Activated B cell treated with CpG ODN at 0.5 μM for 24 hours (primary cell): ENCODE measurements at regions of chr11 and their contacts with region 1.

Region 1: DNA sequence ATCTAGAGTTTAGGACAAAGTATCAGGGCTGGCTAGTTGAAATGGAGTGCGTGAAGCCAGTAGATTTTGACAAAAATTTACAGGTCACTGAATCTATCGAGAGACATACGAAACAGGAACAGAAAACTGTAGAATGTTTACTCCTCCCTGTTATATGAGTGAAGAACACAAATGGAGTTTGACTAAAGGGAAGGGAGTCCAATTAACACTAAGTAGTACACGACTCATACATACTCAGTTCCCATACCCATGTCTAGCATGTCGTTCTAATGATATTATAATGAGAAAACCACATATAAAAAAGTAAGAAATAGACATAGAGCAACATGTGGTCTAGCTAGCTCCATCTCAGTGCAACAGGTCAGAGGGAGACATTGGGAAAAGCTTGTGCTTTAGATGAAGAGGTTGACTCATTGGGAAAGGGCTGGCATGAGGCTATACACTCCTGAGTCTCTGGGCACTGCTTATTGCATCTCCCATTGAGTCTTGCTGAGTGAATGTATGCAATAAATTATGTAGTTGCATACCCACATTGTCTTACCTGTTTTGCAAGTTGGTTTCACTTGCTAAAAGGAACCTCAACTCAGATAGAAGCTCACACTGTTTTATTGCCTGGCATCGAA is 43.5 kb downstream of the CD44 start:
- DNase-seq: no peak
- ATAC-seq: peak; percentile 68
- H3K4me3 Mint-ChIP-seq: peak overlapping the region; percentile 68
- H3K27ac Mint-ChIP-seq: peak overlapping the region; percentile 80
- H3K4me1 Mint-ChIP-seq: peaks cover 79% of the 10 kb centered on the region
- H3K27me3 Mint-ChIP-seq: no peaks in the 10 kb centered on the region
- CTCF ChIP-seq: no peak

Region 2: DNA sequence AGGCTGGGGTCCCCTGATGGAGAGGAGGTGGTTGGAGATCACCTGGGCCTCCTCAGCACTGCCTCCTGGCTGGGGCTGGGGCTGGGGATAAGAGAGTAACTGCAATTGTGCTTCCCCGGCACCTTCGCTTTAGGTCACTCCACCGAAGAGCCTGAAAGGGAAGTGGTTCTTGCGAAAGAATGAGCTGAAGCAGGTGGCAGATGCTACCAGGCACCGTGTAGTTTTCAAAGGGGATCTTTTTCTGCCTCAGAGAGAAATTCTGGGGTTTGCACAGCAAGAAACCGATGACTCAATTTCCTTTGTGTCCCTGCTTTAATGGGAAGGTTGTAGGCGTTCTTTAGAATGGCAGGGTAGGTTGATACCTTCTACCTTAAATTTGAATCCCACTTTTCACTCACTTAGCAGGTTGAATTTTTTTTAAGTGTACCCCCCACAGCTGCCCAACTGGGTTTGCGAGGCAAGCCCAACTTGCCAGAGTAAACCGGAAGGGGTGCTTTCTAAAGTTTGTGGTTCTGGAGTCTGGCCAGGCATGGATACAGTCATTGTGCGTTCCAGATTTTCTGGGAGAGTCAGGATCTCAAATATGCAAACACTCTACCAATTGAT is 38.2 kb before region 1 on chr11:
- CTCF ChIA-PET with region 1: interaction called, 3 read pairs
- POLR2A ChIA-PET with region 1: interaction called, 4 read pairs
- intact Hi-C with region 1: loop called (anchors 5 kb)
- DNase-seq: peak; percentile 63
- ATAC-seq: peak; percentile 62
- H3K4me3 Mint-ChIP-seq: peak overlapping the region; percentile 97
- H3K27ac Mint-ChIP-seq: peak overlapping the region; percentile 90
- H3K4me1 Mint-ChIP-seq: peaks cover 81% of the 10 kb centered on the region
- H3K27me3 Mint-ChIP-seq: no peaks in the 10 kb centered on the region
- CTCF ChIP-seq: no peak

Region 3: GRCh38 chr11:35197292-35197691 is 14.9 kb after region 1 on chr11:
- CTCF ChIA-PET with region 1: interaction called, 4 read pairs
- POLR2A ChIA-PET with region 1: interaction called, 5 read pairs
- intact Hi-C with region 1: loop called (anchors 2 kb)
- DNase-seq: no peak
- ATAC-seq: no peak
- H3K4me3 Mint-ChIP-seq: no peak overlapping the region
- H3K27ac Mint-ChIP-seq: no peak overlapping the region
- H3K4me1 Mint-ChIP-seq: peaks cover 17% of the 10 kb centered on the region
- H3K27me3 Mint-ChIP-seq: no peaks in the 10 kb centered on the region
- CTCF ChIP-seq: no peak